Heart left ventricle (tissue), 16 donors: ENCODE measurements at regions of chr12 and their contacts with region 1.

Region 1: DNA sequence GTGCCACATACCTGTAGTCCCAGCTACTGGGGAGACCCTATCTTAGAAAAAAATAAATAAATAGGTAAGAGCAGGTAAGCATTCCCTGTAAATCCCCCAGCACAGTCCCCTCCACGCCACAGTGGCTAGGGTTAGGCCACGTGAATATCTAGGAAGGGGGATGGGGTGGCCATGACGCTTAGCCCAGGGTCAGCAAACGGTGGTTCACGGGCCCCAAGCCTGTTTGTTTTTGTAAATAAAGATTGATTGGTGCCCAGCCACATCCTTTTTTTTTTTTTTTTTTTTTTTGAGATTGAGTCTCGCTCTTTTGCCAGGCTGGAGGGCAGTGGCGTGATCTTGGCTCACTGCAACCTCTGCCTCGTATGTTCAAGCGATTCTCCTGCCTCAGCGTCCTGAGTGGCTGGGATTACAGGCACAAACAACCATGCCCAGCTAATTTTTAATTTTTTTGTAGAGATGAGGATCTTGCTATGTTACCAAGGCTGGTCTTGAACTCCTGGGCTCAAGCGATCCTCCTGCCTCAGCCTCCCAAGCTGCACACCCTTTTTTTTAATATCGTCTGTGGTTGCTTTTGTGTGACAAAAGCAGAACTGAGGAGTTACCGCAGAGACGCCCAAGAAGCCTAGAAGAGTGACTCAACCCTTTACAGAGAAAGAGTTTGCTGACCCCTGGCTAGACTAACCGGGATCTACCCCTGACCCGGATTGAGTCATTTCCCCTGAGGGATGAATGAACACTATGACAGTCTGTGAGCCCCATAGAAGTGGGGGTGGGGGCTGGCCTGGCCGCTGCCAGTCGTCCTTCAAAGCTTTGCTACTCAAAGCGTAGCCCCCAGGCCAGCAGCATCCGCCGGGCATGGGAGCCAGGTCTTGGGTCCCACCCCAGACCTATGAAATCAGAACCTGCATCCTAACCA is 113.7 kb upstream of the NCOR2 start:
- DNase-seq: peak in 3 of 5 donors; percentile 62 to 86 (median 76)
- ATAC-seq: peak; percentile 27 to 82 (median 60)
- H3K4me3 ChIP-seq: no peak overlapping the region
- H3K27ac ChIP-seq: peak overlapping the region; percentile 11 to 90 (median 80)
- H3K4me1 ChIP-seq: peaks cover 13 to 75% (median 53%) of the 10 kb centered on the region in 12 donors
- H3K27me3 ChIP-seq: no peaks in the 10 kb centered on the region
- CTCF ChIP-seq: peak in 11 of 12 donors; percentile 11 to 48 (median 34)
- POLR2A ChIP-seq: no peak

Region 2: GRCh38 chr12:124388679-124389536 is 292.2 kb before region 1 on chr12:
- intact Hi-C with region 1: loop called in 1 of 10 experiments (anchors 5 kb)
- DNase-seq: peak; percentile 89 to 93 (median 93)
- ATAC-seq: peak; percentile 21 to 67 (median 59)
- H3K4me3 ChIP-seq: peak overlapping the region; percentile 33 to 81 (median 64)
- H3K27ac ChIP-seq: peak overlapping the region; percentile 73 to 99 (median 96)
- H3K4me1 ChIP-seq: peaks cover 23 to 98% (median 90%) of the 10 kb centered on the region in 12 donors
- H3K27me3 ChIP-seq: no peaks in the 10 kb centered on the region
- CTCF ChIP-seq: peak in 3 of 12 donors; percentile 9 to 34 (median 22)
- POLR2A ChIP-seq: peak in 1 of 2 donors; percentile 52

Region 3: GRCh38 chr12:124588751-124589267 is 92.3 kb before region 1 on chr12:
- intact Hi-C with region 1: loop called in 1 of 10 experiments (anchors 5 kb)
- DNase-seq: peak; percentile 72 to 83 (median 76)
- ATAC-seq: peak; percentile 80 to 86 (median 85)
- H3K4me3 ChIP-seq: no peak overlapping the region
- H3K27ac ChIP-seq: peak overlapping the region; percentile 2 to 78 (median 52)
- H3K4me1 ChIP-seq: peaks cover 0 to 57% (median 12%) of the 10 kb centered on the region in 12 donors
- H3K27me3 ChIP-seq: no peaks in the 10 kb centered on the region
- CTCF ChIP-seq: no peak
- POLR2A ChIP-seq: no peak

Region 4: GRCh38 chr12:124727264-124727721 is 46.2 kb after region 1 on chr12:
- intact Hi-C with region 1: loop called in 1 of 10 experiments (anchors 5 kb)
- DNase-seq: peak; percentile 73 to 89 (median 85)
- ATAC-seq: peak; percentile 68 to 92 (median 86)
- H3K4me3 ChIP-seq: no peak overlapping the region
- H3K27ac ChIP-seq: peak overlapping the region in 11 of 12 donors; percentile 31 to 93 (median 56)
- H3K4me1 ChIP-seq: peaks cover 0 to 62% (median 14%) of the 10 kb centered on the region in 12 donors
- H3K27me3 ChIP-seq: no peaks in the 10 kb centered on the region
- CTCF ChIP-seq: peak in 1 of 12 donors; percentile 8
- POLR2A ChIP-seq: no peak

Region 5: DNA sequence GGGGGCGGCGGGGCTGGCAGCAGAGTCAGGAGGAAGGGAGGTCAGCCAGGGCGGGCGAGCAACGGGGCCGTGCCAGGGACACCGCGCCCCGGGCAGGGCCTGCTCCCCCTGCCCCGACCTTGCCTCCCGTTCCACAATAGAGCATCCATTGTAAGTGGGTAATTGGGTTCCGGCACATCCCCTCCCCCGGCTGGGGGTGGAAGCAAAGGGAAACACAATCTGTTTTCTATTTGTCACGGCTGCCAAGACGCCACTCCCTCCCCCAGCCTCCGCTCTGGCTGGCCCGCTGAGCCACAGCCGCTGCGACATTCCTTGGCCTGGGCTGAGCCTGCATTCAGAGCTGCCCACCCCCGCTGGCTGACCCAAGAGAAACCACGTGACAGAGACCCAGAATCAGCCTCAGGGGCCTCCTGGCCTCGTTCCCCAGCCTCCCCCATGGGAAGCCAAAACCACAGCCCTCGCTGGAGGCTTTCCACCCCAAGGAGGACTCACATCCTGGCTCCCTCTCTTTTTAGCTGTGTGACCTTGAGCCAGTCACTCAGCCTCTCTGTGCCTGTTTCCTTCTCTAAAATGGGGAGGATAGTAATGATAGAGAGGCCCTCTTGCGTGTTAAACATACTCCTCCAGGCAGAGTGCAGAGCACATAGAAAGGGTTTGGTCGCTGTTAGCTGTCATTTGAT is 64.9 kb after region 1 on chr12:
- intact Hi-C with region 1: loop called in 3 of 10 experiments (anchors 5 to 10 kb)
- DNase-seq: peak; percentile 94 to 96 (median 96)
- ATAC-seq: peak; percentile 92 to 97 (median 96)
- H3K4me3 ChIP-seq: peak overlapping the region in 4 of 12 donors; percentile 16 to 20 (median 18)
- H3K27ac ChIP-seq: peak overlapping the region; percentile 67 to 93 (median 85)
- H3K4me1 ChIP-seq: peaks cover 4 to 34% (median 13%) of the 10 kb centered on the region in 12 donors
- H3K27me3 ChIP-seq: no peaks in the 10 kb centered on the region
- CTCF ChIP-seq: no peak
- POLR2A ChIP-seq: peak in 1 of 2 donors; percentile 22

Region 6: GRCh38 chr12:124754949-124755800 is 74.1 kb after region 1 on chr12:
- intact Hi-C with region 1: loop called in 1 of 10 experiments (anchors 5 kb)
- DNase-seq: peak; percentile 86 to 94 (median 91)
- ATAC-seq: peak; percentile 91 to 95 (median 94)
- H3K4me3 ChIP-seq: no peak overlapping the region
- H3K27ac ChIP-seq: peak overlapping the region; percentile 73 to 95 (median 86)
- H3K4me1 ChIP-seq: peaks cover 3 to 74% (median 35%) of the 10 kb centered on the region in 12 donors
- H3K27me3 ChIP-seq: no peaks in the 10 kb centered on the region
- CTCF ChIP-seq: no peak
- POLR2A ChIP-seq: peak in 1 of 2 donors; percentile 16

Region 7: GRCh38 chr12:124852329-124852831 is 171.3 kb after region 1 on chr12:
- intact Hi-C with region 1: no loop called
- DNase-seq: peak in 4 of 5 donors; percentile 52 to 85 (median 68)
- ATAC-seq: peak; percentile 19 to 70 (median 48)
- H3K4me3 ChIP-seq: no peak overlapping the region
- H3K27ac ChIP-seq: peak overlapping the region in 2 of 12 donors; percentile 12 to 88
- H3K4me1 ChIP-seq: peaks cover 0 to 57% (median 31%) of the 10 kb centered on the region in 12 donors
- H3K27me3 ChIP-seq: no peaks in the 10 kb centered on the region
- CTCF ChIP-seq: no peak
- POLR2A ChIP-seq: no peak